ENCODE measurements at regions of chr20 and their contacts with region 1.

Region 1: GRCh38 chr20:44460795-44461141 is 14.9 kb upstream of the TTPAL start:
- DNase-seq: peak; percentile 51
- H3K4me3 ChIP-seq: no peak overlapping the region
- H3K27ac ChIP-seq: peak overlapping the region; percentile 36 to 48
- H3K4me1 ChIP-seq: no peaks in the 10 kb centered on the region
- H3K27me3 ChIP-seq: no peaks in the 10 kb centered on the region
- CTCF ChIP-seq: peak; percentile 17 to 40 (median 34)
- POLR2A ChIP-seq: no peak

Region 2: DNA sequence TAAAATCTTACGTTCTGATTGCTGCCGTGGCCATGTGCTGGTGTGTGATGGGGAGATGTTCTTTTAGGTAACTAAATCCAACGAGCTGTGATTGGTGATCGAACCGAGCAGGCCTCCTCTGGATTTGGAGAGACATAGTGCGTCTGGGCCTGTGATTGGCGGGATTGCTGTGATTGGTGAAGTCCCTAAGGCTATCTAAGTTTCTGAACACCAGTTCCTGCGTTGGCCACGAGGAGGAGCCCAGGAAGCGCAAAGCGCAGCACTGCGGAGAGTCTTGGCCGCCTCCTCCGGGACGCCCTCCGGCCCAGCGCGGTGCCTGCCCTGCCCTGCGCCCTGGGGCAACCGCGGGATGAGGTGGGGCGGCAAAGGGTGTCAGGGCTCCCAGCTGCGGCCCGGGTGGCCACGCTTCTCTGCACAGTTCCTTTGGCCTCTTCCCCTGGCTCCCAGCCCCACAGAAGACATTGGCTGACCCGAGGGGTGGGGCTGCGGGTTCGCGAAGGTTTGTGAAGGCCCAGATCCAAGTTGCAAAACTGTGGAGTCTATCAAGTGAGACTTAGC is 72.2 kb before region 1 on chr20:
- intact Hi-C with region 1: loop called (anchors 5 kb)
- DNase-seq: peak; percentile 84
- H3K4me3 ChIP-seq: peak overlapping the region in 1 of 2 donors; percentile 17
- H3K27ac ChIP-seq: no peak overlapping the region
- H3K4me1 ChIP-seq: peaks cover 8% of the 10 kb centered on the region
- H3K27me3 ChIP-seq: no peaks in the 10 kb centered on the region
- CTCF ChIP-seq: peak; percentile 74 to 87 (median 78)
- POLR2A ChIP-seq: no peak

Region 3: DNA sequence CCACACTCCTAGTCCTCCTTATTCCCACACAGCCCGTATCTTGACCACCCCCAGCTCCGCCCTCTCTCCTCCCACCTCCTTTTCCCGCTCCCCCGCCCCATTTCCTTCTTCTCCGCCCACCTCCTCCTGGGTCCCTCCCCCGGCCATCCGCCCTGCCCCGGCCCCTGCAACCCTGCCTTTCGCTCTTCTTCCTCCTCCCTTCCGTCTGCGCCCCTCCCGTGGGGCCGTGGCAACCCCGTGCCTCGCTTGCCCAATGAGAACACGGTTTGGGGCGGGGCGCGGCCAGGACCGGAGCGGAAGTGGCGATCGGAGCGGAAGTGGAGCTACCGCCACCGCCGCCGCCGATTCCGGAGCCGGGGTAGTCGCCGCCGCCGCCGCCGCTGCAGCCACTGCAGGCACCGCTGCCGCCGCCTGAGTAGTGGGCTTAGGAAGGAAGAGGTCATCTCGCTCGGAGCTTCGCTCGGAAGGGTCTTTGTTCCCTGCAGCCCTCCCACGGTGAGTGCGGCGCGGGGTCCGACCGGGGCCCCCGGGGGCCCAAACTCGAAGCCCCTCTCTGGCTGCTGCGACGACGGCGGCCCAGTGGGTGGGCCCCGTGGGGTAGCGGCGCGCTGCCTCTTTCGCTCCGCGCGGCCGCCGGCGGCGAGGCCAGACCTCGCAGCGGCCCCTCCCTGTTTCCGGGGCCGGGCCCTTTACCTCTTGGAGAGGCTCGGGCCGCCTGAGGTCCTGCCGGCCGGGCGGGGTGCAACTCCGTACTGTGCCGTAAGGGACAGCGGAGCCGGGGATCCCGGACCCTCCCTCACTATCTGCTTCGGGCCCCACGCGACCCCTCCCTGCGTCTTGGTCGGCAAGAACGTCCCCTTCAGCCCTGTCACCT is 424.9 kb after region 1 on chr20 and contains the start of gene YWHAB:
- intact Hi-C with region 1: no loop called
- DNase-seq: peak; percentile 98
- H3K4me3 ChIP-seq: peak within 1 kb of the TSS; percentile 96
- H3K27ac ChIP-seq: peak within 1 kb of the TSS; percentile 95
- H3K4me1 ChIP-seq: peaks cover 23% of the 10 kb centered on the region
- H3K27me3 ChIP-seq: no peaks in the 10 kb centered on the region
- CTCF ChIP-seq: peak in 1 of 3 experiments; percentile 25
- POLR2A ChIP-seq: peak; percentile 41
- total RNA-seq, gene YWHAB: 106 to 127 TPM